PC-9 (cell line): ENCODE measurements at regions of chr12 and their contacts with region 1.

Region 1: DNA sequence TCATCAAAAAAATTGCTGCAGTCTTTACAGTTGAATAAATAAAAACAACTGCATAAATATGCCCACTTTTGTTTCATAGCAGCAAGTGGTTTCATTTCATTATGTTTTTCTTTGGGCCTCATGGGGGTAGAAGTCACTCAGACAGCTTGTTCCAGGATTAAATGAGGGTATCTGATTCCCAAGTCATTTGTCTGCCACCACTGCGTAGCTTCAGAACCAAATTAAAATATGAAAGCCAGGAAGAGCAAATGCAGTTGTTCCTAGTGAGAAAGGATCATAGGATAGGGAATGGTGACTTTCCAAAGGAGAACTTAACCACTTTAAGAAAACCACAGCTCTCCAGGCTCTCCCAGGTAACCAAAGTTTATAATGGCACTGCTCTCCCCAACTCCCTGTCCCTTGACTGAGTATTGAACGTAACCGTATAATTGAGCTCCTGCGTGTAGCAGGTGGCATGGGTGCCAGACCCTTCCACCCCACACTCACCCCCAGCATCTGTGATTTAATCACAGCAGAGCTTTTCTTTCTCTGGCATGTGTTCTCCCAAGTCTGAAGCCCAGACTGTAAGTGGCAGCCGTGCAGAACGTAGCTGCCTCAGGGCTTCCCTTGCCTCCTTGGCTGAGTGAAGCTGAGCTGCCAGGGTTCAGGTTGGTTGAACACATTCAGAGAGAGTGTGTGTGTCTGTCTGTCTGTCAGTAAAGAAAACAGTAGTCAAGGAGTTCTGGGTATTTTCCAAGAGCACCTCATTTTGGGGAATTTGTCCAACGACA is 11.3 kb upstream of the KCNH3 start:
- DNase-seq: no peak
- H3K4me3 ChIP-seq: no peak overlapping the region
- H3K27ac ChIP-seq: no peak overlapping the region
- H3K4me1 ChIP-seq: no peaks in the 10 kb centered on the region
- H3K27me3 ChIP-seq: no peaks in the 10 kb centered on the region
- CTCF ChIP-seq: no peak

Region 2: GRCh38 chr12:49098035-49098451 is 429.5 kb before region 1 on chr12:
- CTCF ChIA-PET with region 1: interaction called, 10 read pairs
- POLR2A ChIA-PET with region 1: no interaction called
- intact Hi-C with region 1: no loop called
- DNase-seq: no peak
- H3K4me3 ChIP-seq: no peak overlapping the region
- H3K27ac ChIP-seq: no peak overlapping the region
- H3K4me1 ChIP-seq: 0 out of 2 replicates have a peak, but pooled peaks cover 4% of the 10 kb centered on the region
- H3K27me3 ChIP-seq: peaks cover 16% of the 10 kb centered on the region
- CTCF ChIP-seq: peak; percentile 80

Region 3: DNA sequence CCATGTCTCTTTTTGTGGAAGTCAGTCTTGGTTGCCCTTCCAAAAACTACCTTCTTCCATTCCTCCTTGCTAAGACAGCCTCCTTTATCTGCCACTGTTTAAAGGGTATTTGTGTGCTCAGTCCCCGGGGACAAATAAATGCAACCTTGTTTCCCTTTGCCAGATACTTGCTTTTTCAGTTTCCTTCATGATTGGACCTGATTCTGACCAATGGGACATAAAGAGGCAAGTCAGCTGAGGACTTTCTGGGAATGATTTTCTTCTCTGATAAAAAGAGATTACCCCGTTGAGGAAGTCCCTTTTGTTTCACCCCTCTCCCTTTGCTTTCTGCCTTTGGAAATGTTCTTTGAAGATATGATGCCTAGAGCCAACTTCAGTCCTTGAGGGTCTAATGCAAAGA is 389.0 kb before region 1 on chr12:
- CTCF ChIA-PET with region 1: interaction called, 16 read pairs
- POLR2A ChIA-PET with region 1: no interaction called
- intact Hi-C with region 1: no loop called
- DNase-seq: no peak
- H3K4me3 ChIP-seq: no peak overlapping the region
- H3K27ac ChIP-seq: no peak overlapping the region
- H3K4me1 ChIP-seq: no peaks in the 10 kb centered on the region
- H3K27me3 ChIP-seq: no peaks in the 10 kb centered on the region
- CTCF ChIP-seq: no peak

Region 4: GRCh38 chr12:49587174-49587908 is 59.8 kb after region 1 on chr12:
- CTCF ChIA-PET with region 1: no interaction called
- POLR2A ChIA-PET with region 1: no interaction called
- intact Hi-C with region 1: no loop called
- DNase-seq: no peak
- H3K4me3 ChIP-seq: no peak overlapping the region
- H3K27ac ChIP-seq: no peak overlapping the region
- H3K4me1 ChIP-seq: no peaks in the 10 kb centered on the region
- H3K27me3 ChIP-seq: no peaks in the 10 kb centered on the region
- CTCF ChIP-seq: no peak

Region 5: DNA sequence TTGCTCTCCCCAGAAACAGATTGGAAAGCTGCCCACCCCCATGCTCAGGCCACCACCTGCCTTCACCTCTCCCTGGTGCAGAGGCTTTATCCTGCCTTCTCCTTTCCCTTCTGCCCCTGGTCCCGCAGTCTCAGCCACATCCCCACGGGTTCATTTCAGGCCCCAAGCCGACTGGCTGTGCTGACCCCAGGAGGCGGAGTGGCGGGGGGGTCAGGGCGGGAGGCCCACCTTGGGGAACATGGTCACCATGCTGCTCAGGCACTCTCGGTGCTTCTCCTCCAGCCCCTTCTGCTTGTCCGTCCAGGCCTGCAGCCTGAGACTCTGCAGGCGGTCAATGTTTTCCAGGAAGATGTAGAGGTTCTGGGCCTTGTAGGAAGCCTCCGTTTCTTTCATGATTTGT is 71.0 kb after region 1 on chr12:
- CTCF ChIA-PET with region 1: no interaction called
- POLR2A ChIA-PET with region 1: no interaction called
- intact Hi-C with region 1: no loop called
- DNase-seq: no peak
- H3K4me3 ChIP-seq: no peak overlapping the region
- H3K27ac ChIP-seq: no peak overlapping the region
- H3K4me1 ChIP-seq: no peaks in the 10 kb centered on the region
- H3K27me3 ChIP-seq: no peaks in the 10 kb centered on the region
- CTCF ChIP-seq: no peak